Left ventricle myocardium inferior (tissue), 1 donor: ENCODE measurements at regions of chr1 and their contacts with region 1.

Region 1: DNA sequence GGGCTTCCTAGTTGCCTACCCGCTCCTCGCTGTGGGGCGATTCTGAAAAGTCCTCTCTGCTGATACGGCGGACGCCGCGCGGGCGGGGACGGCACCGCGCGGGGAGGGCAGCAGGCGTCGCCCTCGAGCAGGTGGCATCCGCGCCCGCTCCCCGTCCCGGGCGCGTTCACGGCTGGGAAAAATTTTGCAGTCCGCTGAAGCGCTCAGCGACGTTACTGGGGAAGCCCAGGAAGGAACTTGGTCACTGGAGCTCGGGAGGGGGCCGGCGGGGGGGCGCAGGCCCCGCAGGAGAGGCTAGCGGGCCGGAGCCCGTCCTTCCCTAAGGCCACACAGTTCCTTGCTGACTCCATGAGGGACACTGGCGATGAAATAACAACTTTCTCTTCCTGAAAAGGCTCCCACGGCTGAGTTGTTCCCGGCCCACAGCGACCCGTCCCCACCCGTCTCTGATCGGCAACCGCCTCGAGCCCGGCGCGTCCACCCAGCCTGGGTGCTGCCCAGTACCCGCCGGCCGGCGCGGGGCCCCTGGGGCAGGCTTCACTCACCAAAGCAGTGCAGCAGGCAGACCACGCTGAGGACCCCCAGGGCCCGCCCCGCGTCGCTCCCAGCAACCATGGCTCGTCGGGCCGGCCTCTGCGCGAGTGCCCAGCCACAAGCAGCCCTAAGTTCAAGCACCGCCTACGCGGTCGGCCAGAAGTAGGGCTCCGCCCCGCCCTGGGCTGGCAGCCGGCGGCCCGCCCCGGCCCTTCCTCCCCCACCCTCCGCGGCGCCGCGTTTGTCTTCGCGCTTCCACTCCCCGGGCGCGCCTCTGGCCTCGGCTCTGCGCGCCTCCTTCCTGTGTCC is at the start of gene CD58:
- DNase-seq: peak; percentile 93
- H3K4me3 ChIP-seq: peak within 1 kb of the TSS; percentile 88
- H3K27ac ChIP-seq: peak within 1 kb of the TSS; percentile 100
- H3K4me1 ChIP-seq: peaks cover 88% of the 10 kb centered on the region
- H3K27me3 ChIP-seq: no peaks in the 10 kb centered on the region
- CTCF ChIP-seq: peak; percentile 74
- total RNA-seq, gene CD58: 32.2 TPM

Region 2: DNA sequence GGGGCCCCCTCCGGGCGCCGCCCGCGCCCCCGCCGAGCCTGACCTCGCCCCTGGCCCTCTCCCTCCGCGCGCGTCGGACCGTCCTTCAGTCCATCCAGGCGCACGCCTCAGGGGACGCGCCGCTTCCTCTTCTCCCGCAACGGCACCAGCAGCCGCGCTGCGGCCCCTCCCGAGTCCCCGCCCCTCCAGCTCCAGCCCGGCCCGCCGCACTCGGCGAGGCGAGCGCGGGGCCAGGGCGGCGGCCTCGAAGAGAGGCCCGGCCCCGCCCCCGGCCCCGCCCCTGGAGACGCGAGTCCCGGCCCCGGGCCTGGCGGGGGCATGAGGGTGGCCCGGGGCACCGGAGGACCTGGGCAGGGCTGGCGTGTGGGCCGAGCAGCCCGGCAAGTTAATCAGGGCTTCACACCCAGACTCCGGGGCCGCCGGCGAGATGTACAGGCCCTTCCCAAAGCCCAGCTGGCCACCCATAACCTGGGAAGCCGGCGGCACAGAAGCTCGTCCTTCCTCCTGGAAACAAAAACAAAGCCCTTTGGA is 97.1 kb after region 1 on chr1 and contains the start of gene IGSF3:
- intact Hi-C with region 1: loop called (anchors 10 kb)
- DNase-seq: peak; percentile 82
- H3K4me3 ChIP-seq: peak within 1 kb of the TSS; percentile 81
- H3K27ac ChIP-seq: peak within 1 kb of the TSS; percentile 63
- H3K4me1 ChIP-seq: peaks cover 35% of the 10 kb centered on the region
- H3K27me3 ChIP-seq: peaks cover 27% of the 10 kb centered on the region
- CTCF ChIP-seq: no peak
- total RNA-seq, gene IGSF3: 19.9 TPM